ENCODE measurements at regions of chr16 and their contacts with region 1.

Region 1: DNA sequence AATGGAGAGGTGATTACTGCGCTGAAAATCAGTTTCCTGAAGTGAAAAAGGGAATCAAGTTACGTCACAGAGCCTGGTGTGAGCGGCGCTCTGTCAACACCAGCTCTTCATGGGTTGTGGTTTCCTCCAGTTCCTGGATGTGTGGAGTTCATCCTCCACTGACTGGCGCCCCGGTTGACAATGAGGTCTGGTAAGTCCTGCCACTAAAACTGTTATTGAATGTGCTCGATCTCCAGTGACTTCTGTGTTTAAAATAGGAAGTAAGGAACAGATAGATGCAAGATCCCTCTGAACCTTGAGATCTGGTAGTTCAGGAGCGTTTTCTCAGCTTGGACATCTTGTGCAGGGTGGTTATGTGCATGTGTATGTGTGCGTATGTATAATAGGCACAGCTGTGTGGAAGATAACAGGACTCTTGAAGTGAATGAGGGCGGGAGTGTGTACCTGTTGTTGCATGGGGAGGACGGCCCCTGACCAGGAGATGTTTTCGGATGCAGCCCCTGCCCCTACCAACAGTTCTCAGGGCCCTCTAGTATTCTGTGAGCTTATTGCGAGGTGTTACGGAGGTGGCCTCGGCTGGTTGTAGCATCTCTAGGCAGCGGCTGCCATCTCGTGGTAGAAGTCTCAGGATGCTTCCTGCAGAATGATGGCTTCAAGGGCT is 22.0 kb upstream of the GOT2 start:
- DNase-seq: peak; percentile 61 to 90 (median 74)
- ATAC-seq: peak; percentile 88
- H3K4me3 ChIP-seq: peak overlapping the region; percentile 26
- H3K4me3 Mint-ChIP-seq: peak overlapping the region; percentile 62
- H3K27ac ChIP-seq: peak overlapping the region in 1 of 2 donors; percentile 14
- H3K27ac Mint-ChIP-seq: peak overlapping the region; percentile 86
- H3K4me1 ChIP-seq: peaks cover 7% of the 10 kb centered on the region
- H3K4me1 Mint-ChIP-seq: peaks cover 10% of the 10 kb centered on the region
- H3K27me3 ChIP-seq: no peaks in the 10 kb centered on the region
- H3K27me3 Mint-ChIP-seq: no peaks in the 10 kb centered on the region
- CTCF ChIP-seq: peak; percentile 85

Region 2: DNA sequence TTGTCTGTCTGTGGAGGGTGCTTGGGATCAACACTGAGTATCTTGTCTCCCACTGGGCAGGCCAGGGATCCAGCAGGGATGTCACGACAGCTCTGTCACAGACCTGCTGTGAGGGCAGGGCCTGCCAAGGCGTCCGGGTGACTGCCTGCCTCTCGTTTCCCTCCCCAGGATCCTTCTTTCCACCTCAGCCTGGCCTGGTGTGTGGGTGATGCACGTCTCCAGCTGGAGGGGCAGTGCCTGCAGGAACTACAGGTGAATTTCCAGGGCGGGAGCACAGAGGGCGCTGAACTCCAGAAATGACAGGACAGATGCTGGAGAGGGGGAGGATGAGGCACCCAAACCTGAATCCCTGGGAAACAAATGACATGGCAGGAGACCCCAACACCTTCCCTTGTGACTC is 737.3 kb before region 1 on chr16:
- CTCF ChIA-PET with region 1: no interaction called
- POLR2A ChIA-PET with region 1: no interaction called
- intact Hi-C with region 1: loop called in 1 of 2 experiments (anchors 5 kb)
- DNase-seq: no peak
- ATAC-seq: no peak
- H3K4me3 ChIP-seq: no peak overlapping the region
- H3K4me3 Mint-ChIP-seq: no peak overlapping the region
- H3K27ac ChIP-seq: no peak overlapping the region
- H3K27ac Mint-ChIP-seq: no peak overlapping the region
- H3K4me1 ChIP-seq: peaks cover 13% of the 10 kb centered on the region
- H3K4me1 Mint-ChIP-seq: peaks cover 10% of the 10 kb centered on the region
- H3K27me3 ChIP-seq: no peaks in the 10 kb centered on the region
- H3K27me3 Mint-ChIP-seq: no peaks in the 10 kb centered on the region
- CTCF ChIP-seq: no peak

Region 3: GRCh38 chr16:58336332-58337089 is 419.6 kb before region 1 on chr16:
- CTCF ChIA-PET with region 1: interaction called, 39 read pairs
- POLR2A ChIA-PET with region 1: interaction called, 12 read pairs
- intact Hi-C with region 1: loop called in 1 of 2 experiments (anchors 1 kb)
- DNase-seq: peak; percentile 61 to 88 (median 81)
- ATAC-seq: peak; percentile 85
- H3K4me3 ChIP-seq: no peak overlapping the region
- H3K4me3 Mint-ChIP-seq: peak overlapping the region; percentile 23
- H3K27ac ChIP-seq: no peak overlapping the region
- H3K27ac Mint-ChIP-seq: no peak overlapping the region
- H3K4me1 ChIP-seq: peaks cover 8% of the 10 kb centered on the region
- H3K4me1 Mint-ChIP-seq: peaks cover 7% of the 10 kb centered on the region
- H3K27me3 ChIP-seq: peaks cover 0 to 1% of the 10 kb centered on the region in 2 experiments
- H3K27me3 Mint-ChIP-seq: peaks cover 14% of the 10 kb centered on the region
- CTCF ChIP-seq: peak; percentile 97

Region 4: GRCh38 chr16:58563235-58563634 is 192.9 kb before region 1 on chr16:
- CTCF ChIA-PET with region 1: no interaction called
- POLR2A ChIA-PET with region 1: no interaction called
- intact Hi-C with region 1: loop called in 1 of 2 experiments (anchors 5 kb)
- DNase-seq: no peak
- ATAC-seq: no peak
- H3K4me3 ChIP-seq: no peak overlapping the region
- H3K4me3 Mint-ChIP-seq: no peak overlapping the region
- H3K27ac ChIP-seq: no peak overlapping the region
- H3K27ac Mint-ChIP-seq: peak overlapping the region; percentile 21
- H3K4me1 ChIP-seq: no peaks in the 10 kb centered on the region
- H3K4me1 Mint-ChIP-seq: peaks cover 11% of the 10 kb centered on the region
- H3K27me3 ChIP-seq: no peaks in the 10 kb centered on the region
- H3K27me3 Mint-ChIP-seq: no peaks in the 10 kb centered on the region
- CTCF ChIP-seq: no peak

Region 5: DNA sequence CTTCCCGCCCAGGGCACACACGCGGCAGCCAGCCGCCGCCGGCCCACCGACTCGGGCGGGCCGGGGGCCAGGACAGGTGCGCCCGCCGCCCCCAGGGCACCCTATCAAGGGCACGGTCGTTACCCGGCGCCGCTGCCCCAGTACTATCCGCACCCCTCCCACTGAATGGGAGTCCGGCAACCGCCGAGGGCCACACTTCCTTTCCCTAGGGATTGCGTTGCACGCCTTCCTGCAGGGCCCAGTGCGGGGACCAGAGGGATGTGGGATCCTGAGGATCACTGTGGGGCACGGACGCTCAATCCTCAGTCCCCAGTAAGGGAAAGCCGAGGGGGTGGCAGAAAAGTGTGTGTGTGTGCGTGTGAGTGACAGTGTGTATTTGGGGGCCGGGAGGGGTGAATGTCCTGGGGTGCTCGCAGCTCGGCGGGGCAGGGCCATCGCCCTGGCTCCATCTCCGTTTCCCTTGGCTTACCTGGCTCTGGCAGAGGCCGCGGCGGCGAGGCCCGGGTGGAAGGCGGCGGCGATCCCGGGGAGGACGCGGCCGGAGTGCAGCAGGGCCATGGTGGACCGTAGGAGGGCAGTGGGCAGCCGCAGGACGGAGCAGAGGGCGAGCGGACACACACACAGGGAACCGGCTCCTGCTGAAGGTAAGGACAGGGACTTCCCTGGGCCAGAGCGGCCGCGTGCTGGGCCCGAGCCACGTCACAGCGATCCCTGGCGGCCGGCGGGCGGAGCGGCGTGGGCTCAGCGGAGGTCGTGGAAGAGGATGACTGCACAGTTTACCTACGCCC is 22.3 kb before region 1 on chr16 and contains the start of gene GOT2:
- CTCF ChIA-PET with region 1: interaction called, 13 read pairs
- POLR2A ChIA-PET with region 1: interaction called, 3 read pairs
- intact Hi-C with region 1: loop called in 1 of 2 experiments (anchors 1 kb)
- DNase-seq: peak; percentile 62 to 89 (median 74)
- ATAC-seq: peak; percentile 97
- H3K4me3 ChIP-seq: peak within 1 kb of the TSS; percentile 92
- H3K4me3 Mint-ChIP-seq: peak within 1 kb of the TSS; percentile 99
- H3K27ac ChIP-seq: peak within 1 kb of the TSS in 1 of 2 donors; percentile 43
- H3K27ac Mint-ChIP-seq: peak within 1 kb of the TSS; percentile 71
- H3K4me1 ChIP-seq: peaks cover 15% of the 10 kb centered on the region
- H3K4me1 Mint-ChIP-seq: peaks cover 56% of the 10 kb centered on the region
- H3K27me3 ChIP-seq: no peaks in the 10 kb centered on the region
- H3K27me3 Mint-ChIP-seq: no peaks in the 10 kb centered on the region
- CTCF ChIP-seq: peak; percentile 88
- total RNA-seq, gene GOT2: 17.4 to 18.7 TPM

Region 6: DNA sequence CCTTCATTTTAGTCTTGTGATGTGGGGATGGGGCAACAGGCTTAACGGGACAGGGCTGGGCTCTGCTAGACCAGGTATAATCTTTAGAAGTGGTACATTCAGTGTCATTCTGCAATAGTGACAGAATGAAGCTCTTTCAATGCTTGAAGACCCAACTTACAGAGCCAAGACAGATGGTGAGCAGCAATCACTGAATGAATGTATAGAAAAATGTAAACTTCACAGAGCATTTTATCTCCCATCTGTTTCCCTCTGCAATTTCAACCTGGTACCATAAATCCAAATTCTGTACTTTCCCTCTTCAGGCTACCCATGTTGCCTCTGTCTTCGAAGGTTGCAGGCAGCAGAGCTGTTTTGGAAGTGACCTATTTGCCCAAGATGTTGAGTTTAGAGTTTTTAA is 11.5 kb after region 1 on chr16:
- CTCF ChIA-PET with region 1: no interaction called
- POLR2A ChIA-PET with region 1: no interaction called
- intact Hi-C with region 1: no loop called
- DNase-seq: no peak
- ATAC-seq: no peak
- H3K4me3 ChIP-seq: no peak overlapping the region
- H3K4me3 Mint-ChIP-seq: no peak overlapping the region
- H3K27ac ChIP-seq: no peak overlapping the region
- H3K27ac Mint-ChIP-seq: no peak overlapping the region
- H3K4me1 ChIP-seq: no peaks in the 10 kb centered on the region
- H3K4me1 Mint-ChIP-seq: no peaks in the 10 kb centered on the region
- H3K27me3 ChIP-seq: peaks cover 0 to 2% of the 10 kb centered on the region in 2 experiments
- H3K27me3 Mint-ChIP-seq: peaks cover 26% of the 10 kb centered on the region
- CTCF ChIP-seq: no peak

Region 7: GRCh38 chr16:58853854-58854791 is 98.0 kb after region 1 on chr16:
- CTCF ChIA-PET with region 1: no interaction called
- POLR2A ChIA-PET with region 1: no interaction called
- intact Hi-C with region 1: no loop called
- DNase-seq: peak in 1 of 14 experiments; percentile 5
- ATAC-seq: no peak
- H3K4me3 ChIP-seq: no peak overlapping the region
- H3K4me3 Mint-ChIP-seq: no peak overlapping the region
- H3K27ac ChIP-seq: no peak overlapping the region
- H3K27ac Mint-ChIP-seq: no peak overlapping the region
- H3K4me1 ChIP-seq: no peaks in the 10 kb centered on the region
- H3K4me1 Mint-ChIP-seq: no peaks in the 10 kb centered on the region
- H3K27me3 ChIP-seq: no peaks in the 10 kb centered on the region
- H3K27me3 Mint-ChIP-seq: peaks cover 21% of the 10 kb centered on the region
- CTCF ChIP-seq: no peak

Region 8: GRCh38 chr16:59192551-59193199 is 436.6 kb after region 1 on chr16:
- CTCF ChIA-PET with region 1: no interaction called
- POLR2A ChIA-PET with region 1: no interaction called
- intact Hi-C with region 1: no loop called
- DNase-seq: peak in 3 of 14 experiments; percentile 5 to 21 (median 7)
- ATAC-seq: no peak
- H3K4me3 ChIP-seq: no peak overlapping the region
- H3K4me3 Mint-ChIP-seq: no peak overlapping the region
- H3K27ac ChIP-seq: no peak overlapping the region
- H3K27ac Mint-ChIP-seq: no peak overlapping the region
- H3K4me1 ChIP-seq: no peaks in the 10 kb centered on the region
- H3K4me1 Mint-ChIP-seq: no peaks in the 10 kb centered on the region
- H3K27me3 ChIP-seq: no peaks in the 10 kb centered on the region
- H3K27me3 Mint-ChIP-seq: no peaks in the 10 kb centered on the region
- CTCF ChIP-seq: no peak

Measured in CD4-positive, alpha-beta T cell (primary cell).